OCI-LY7 (cell line): ENCODE measurements at regions of chr10 and their contacts with region 1.

Region 1: GRCh38 chr10:15106352-15107013 is 9.3 kb downstream of the RPP38 start:
- DNase-seq: peak; percentile 63
- H3K4me3 ChIP-seq: no peak overlapping the region
- H3K27ac ChIP-seq: no peak overlapping the region
- H3K4me1 ChIP-seq: no peaks in the 10 kb centered on the region
- CTCF ChIP-seq: peak; percentile 99

Region 2: DNA sequence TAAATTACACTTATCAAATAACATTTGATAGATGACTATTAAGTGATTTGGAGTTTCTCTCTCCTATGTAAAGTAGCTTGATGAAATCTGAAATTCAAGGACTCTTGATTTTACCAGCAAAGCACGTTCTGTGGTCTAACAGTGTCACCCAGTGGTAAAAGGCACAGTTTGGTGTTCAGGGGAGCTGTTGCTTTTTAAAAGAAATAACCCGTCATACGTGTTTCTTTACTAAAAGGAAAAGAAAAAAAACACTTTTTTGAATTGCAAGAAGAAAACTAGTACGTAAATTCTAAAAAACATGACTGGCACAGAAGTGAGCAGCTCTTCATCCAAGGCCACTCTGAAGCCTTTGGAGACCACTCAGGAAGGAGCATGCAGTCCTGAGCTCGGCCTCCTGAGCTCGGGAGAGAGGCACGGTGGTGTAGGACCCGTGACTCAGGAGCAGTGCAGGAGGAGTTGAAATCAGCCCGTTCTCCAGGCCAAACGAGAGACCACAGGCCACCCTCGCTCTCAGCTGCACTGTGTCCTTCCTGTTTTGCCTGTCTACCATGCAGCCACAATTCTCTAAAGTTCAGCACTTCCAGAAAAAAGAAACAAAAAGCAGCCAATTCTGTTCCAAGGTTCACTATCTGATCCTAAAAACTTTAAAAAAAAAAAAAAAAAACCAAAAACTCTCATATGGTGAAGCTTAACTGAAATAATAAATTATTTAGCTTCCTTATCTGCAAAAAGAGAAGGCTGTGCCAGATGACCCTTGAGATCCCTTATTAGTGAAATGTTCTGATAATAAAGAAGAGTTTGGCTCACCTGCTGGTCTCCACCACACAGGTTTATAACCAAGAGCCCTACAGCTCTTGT is 563.2 kb before region 1 on chr10:
- CTCF ChIA-PET with region 1: no interaction called
- POLR2A ChIA-PET with region 1: no interaction called
- intact Hi-C with region 1: no loop called
- DNase-seq: no peak
- H3K4me3 ChIP-seq: no peak overlapping the region
- H3K27ac ChIP-seq: peak overlapping the region; percentile 11
- H3K4me1 ChIP-seq: peaks cover 42% of the 10 kb centered on the region
- CTCF ChIP-seq: 0 out of 2 replicates have a peak, but pooled peaks have one; percentile 31

Region 3: GRCh38 chr10:14995964-14996565 is 110.4 kb before region 1 on chr10:
- CTCF ChIA-PET with region 1: no interaction called
- POLR2A ChIA-PET with region 1: no interaction called
- intact Hi-C with region 1: loop called (anchors 1 kb)
- DNase-seq: no peak
- H3K4me3 ChIP-seq: no peak overlapping the region
- H3K27ac ChIP-seq: no peak overlapping the region
- H3K4me1 ChIP-seq: no peaks in the 10 kb centered on the region
- CTCF ChIP-seq: no peak